G401 (cell line): ENCODE measurements at regions of chr1 and their contacts with region 1.

Region 1: GRCh38 chr1:21244986-21245687 is 45.1 kb downstream of the ECE1 start:
- DNase-seq: no peak

Region 2: GRCh38 chr1:21165646-21166045 is 79.5 kb before region 1 on chr1:
- in situ Hi-C with region 1: no loop called
- DNase-seq: no peak

Region 3: GRCh38 chr1:21368515-21369289 is 123.6 kb after region 1 on chr1:
- in situ Hi-C with region 1: loop called (anchors 10 kb)
- DNase-seq: peak; percentile 80

Region 4: DNA sequence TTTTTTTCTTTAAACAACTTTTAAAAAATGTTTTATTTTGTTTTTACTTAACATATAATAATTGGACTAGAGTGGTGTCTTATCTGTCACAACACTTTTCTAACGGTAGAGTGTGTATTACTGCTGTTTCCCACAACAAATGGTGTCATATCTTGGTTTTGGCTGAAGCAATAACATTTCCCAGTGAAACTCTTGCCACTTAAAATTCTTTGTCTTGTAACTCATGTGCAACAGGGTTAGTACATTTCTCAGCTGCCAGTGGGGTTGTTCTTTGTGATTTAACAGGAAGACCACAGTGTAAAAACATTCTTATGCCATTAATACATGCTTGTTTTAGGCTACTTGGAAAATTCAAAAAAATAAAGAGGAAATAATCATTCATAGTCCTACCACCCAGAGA is 307.6 kb after region 1 on chr1:
- in situ Hi-C with region 1: loop called (anchors 10 kb)
- DNase-seq: no peak